ENCODE measurements at regions of chr12 and their contacts with region 1.

Region 1: GRCh38 chr12:11885261-11886038 is 185.3 kb upstream of the BCL2L14 start:
- DNase-seq: peak; percentile 95
- H3K4me3 ChIP-seq: peak overlapping the region in 1 of 3 experiments; percentile 9
- H3K27ac ChIP-seq: peak overlapping the region; percentile 92
- H3K4me1 ChIP-seq: peaks cover 49% of the 10 kb centered on the region
- H3K27me3 ChIP-seq: no peaks in the 10 kb centered on the region
- CTCF ChIP-seq: no peak
- POLR2A ChIP-seq: peak; percentile 51

Region 2: DNA sequence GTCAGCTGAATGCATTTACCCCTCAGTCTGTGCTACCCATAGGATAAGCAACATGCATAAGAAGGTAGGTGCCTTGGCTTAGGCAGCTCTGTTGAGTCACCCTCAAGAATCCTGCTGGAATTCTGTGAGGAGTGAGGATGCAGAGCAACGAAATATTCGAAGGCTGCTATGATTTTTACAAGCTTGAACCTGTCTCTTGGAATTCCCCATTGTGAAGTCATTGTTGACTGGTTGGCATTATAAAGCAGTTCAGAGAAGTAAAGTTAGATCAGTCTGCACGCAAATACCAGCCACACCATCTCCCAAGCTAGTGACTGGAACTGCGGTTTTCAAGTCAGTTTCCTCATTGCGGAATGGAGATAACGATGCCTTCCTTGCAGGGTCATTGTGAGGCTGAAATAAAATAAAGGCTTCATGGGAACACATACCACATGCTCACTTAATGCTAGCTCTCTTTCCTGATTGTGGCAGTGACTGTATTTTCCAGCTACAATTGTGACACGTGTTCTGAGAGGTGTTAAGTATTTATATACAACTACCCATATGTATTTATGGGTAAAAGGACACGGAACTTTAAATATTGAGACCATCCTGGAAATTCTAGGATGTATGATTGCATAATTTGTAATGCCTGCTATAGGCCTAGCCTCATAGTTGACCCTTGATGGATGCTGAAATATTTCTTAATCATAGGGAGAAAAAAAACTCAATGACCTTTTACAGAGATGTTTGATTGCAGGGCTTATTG is 139.3 kb before region 1 on chr12:
- CTCF ChIA-PET with region 1: no interaction called
- POLR2A ChIA-PET with region 1: no interaction called
- dilution Hi-C with region 1: no loop called
- intact Hi-C with region 1: loop called (anchors 5 kb)
- DNase-seq: peak; percentile 92
- H3K4me3 ChIP-seq: no peak overlapping the region
- H3K27ac ChIP-seq: peak overlapping the region; percentile 74
- H3K4me1 ChIP-seq: peaks cover 34% of the 10 kb centered on the region
- H3K27me3 ChIP-seq: no peaks in the 10 kb centered on the region
- CTCF ChIP-seq: no peak
- POLR2A ChIP-seq: peak; percentile 58

Region 3: DNA sequence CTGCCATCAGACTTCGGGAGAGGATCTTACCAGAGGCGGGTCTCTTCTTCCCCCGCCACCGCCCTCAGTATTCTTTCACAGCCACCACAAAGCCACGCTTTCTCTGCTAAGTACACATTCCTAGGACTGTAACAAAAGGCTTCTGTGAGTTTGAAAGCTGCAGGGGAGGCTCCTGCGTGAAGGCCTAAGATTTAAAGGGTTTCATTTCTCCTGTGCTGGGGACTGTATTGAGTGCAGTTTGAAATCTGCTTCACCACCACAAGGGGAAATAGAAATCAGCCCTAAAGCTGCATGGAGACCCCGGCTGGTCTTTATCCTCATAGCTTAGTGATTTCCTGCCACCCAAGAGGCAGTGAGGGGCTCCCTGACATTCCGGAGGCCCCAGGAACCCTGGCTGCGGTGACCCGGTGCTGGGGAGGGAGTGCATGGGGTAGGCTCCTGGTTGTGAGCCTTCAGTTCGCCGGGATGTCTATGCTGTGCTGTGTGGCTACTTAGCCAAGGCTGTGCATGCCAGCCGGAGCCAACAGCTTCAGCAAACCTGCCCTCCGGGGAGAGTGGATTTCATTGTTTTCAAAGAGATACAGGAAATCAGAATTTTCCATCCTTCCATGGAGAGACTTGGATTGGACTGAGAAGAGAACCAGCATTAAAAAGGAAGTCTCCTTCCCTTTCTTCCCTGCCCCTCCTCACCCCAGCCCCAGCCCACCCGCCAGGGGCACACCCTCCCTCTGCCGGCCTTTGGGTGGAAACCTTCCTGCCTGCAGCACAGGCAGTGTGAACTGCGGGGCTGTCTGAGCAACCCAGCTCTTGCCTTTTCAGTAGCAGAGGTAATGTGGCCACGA is 72.6 kb before region 1 on chr12:
- CTCF ChIA-PET with region 1: no interaction called
- POLR2A ChIA-PET with region 1: no interaction called
- dilution Hi-C with region 1: no loop called
- intact Hi-C with region 1: loop called (anchors 5 kb)
- DNase-seq: peak; percentile 59
- H3K4me3 ChIP-seq: peak overlapping the region in 1 of 3 experiments; percentile 29
- H3K27ac ChIP-seq: peak overlapping the region; percentile 77
- H3K4me1 ChIP-seq: peaks cover 35% of the 10 kb centered on the region
- H3K27me3 ChIP-seq: no peaks in the 10 kb centered on the region
- CTCF ChIP-seq: peak in 1 of 2 donors; percentile 40
- POLR2A ChIP-seq: peak; percentile 46

Region 4: GRCh38 chr12:11836282-11837151 is 48.9 kb before region 1 on chr12:
- CTCF ChIA-PET with region 1: no interaction called
- POLR2A ChIA-PET with region 1: no interaction called
- dilution Hi-C with region 1: no loop called
- intact Hi-C with region 1: loop called (anchors 1 kb)
- DNase-seq: no peak
- H3K4me3 ChIP-seq: no peak overlapping the region
- H3K27ac ChIP-seq: no peak overlapping the region
- H3K4me1 ChIP-seq: peaks cover 49% of the 10 kb centered on the region
- H3K27me3 ChIP-seq: no peaks in the 10 kb centered on the region
- CTCF ChIP-seq: no peak
- POLR2A ChIP-seq: no peak

Region 5: GRCh38 chr12:11862798-11863197 is 22.7 kb before region 1 on chr12:
- CTCF ChIA-PET with region 1: interaction called, 5 read pairs
- POLR2A ChIA-PET with region 1: no interaction called
- dilution Hi-C with region 1: no loop called
- intact Hi-C with region 1: loop called (anchors 1 kb)
- DNase-seq: peak; percentile 69
- H3K4me3 ChIP-seq: no peak overlapping the region
- H3K27ac ChIP-seq: peak overlapping the region; percentile 98
- H3K4me1 ChIP-seq: peaks cover 42% of the 10 kb centered on the region
- H3K27me3 ChIP-seq: no peaks in the 10 kb centered on the region
- CTCF ChIP-seq: no peak
- POLR2A ChIP-seq: no peak